Activated T-helper 2 cell treated with anti-CD3 and anti-CD28 coated beads, Interferon-gamma antibody, Interleukin-2, Interleukin-4, amounts not matched to agents 10 μg/mL and 5 μg/mL and 100 μg/mL, durations not matched to agents 14 hours and 24 hours and 36 hours (primary cell): ENCODE measurements at regions of chr11 and their contacts with region 1.

Region 1: GRCh38 chr11:118295834-118296454 is 8.6 kb upstream of the CD3E start:
- DNase-seq: no peak
- H3K4me3 Mint-ChIP-seq: no peak overlapping the region
- H3K27ac Mint-ChIP-seq: no peak overlapping the region
- H3K4me1 Mint-ChIP-seq: peaks cover 16% of the 10 kb centered on the region
- H3K27me3 Mint-ChIP-seq: no peaks in the 10 kb centered on the region

Region 2: GRCh38 chr11:118311518-118311917 is 15.6 kb after region 1 on chr11:
- intact Hi-C with region 1: loop called (anchors 2 kb)
- DNase-seq: no peak
- H3K4me3 Mint-ChIP-seq: no peak overlapping the region
- H3K27ac Mint-ChIP-seq: peak overlapping the region; percentile 35
- H3K4me1 Mint-ChIP-seq: peaks cover 76% of the 10 kb centered on the region
- H3K27me3 Mint-ChIP-seq: no peaks in the 10 kb centered on the region

Region 3: GRCh38 chr11:118353084-118353710 is 57.3 kb after region 1 on chr11:
- intact Hi-C with region 1: loop called (anchors 2 kb)
- DNase-seq: no peak
- H3K4me3 Mint-ChIP-seq: no peak overlapping the region
- H3K27ac Mint-ChIP-seq: peak overlapping the region; percentile 68
- H3K4me1 Mint-ChIP-seq: peaks cover 13% of the 10 kb centered on the region
- H3K27me3 Mint-ChIP-seq: no peaks in the 10 kb centered on the region